CD4-positive, alpha-beta T cell (primary cell): ENCODE measurements at regions of chr1 and their contacts with region 1.

Region 1: DNA sequence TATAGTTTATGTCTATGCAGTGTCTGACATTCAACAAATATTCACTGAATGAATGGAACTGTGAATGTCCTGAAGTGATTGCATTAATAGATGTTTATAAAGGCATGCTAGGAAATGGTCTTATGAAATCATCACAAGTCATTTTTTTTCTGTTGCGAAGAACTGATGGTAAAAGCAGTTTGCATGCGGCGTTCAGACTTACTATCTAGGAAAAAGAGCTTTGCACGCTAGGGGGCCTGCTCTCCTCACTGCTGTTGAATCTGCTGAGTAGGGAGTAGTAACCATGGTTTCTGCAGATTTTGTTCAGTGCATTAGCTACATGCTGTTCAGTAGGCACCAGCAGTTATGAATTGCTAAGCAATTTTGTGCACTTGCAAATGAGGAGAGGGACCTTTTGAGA is 57.9 kb downstream of the CENPF start:
- DNase-seq: peak in 6 of 14 experiments; percentile 8 to 40 (median 26)
- ATAC-seq: peak; percentile 71
- H3K4me3 ChIP-seq: no peak overlapping the region
- H3K4me3 Mint-ChIP-seq: no peak overlapping the region
- H3K27ac ChIP-seq: no peak overlapping the region
- H3K27ac Mint-ChIP-seq: no peak overlapping the region
- H3K4me1 ChIP-seq: no peaks in the 10 kb centered on the region
- H3K4me1 Mint-ChIP-seq: no peaks in the 10 kb centered on the region
- H3K27me3 ChIP-seq: no peaks in the 10 kb centered on the region
- H3K27me3 Mint-ChIP-seq: no peaks in the 10 kb centered on the region
- CTCF ChIP-seq: peak; percentile 39

Region 2: GRCh38 chr1:214637722-214638458 is 23.0 kb before region 1 on chr1:
- CTCF ChIA-PET with region 1: no interaction called
- POLR2A ChIA-PET with region 1: interaction called, 12 read pairs
- intact Hi-C with region 1: no loop called
- DNase-seq: peak in 9 of 14 experiments; percentile 3 to 67 (median 19)
- ATAC-seq: peak; percentile 27
- H3K4me3 ChIP-seq: no peak overlapping the region
- H3K4me3 Mint-ChIP-seq: peak overlapping the region; percentile 68
- H3K27ac ChIP-seq: no peak overlapping the region
- H3K27ac Mint-ChIP-seq: no peak overlapping the region
- H3K4me1 ChIP-seq: peaks cover 18% of the 10 kb centered on the region
- H3K4me1 Mint-ChIP-seq: peaks cover 23% of the 10 kb centered on the region
- H3K27me3 ChIP-seq: no peaks in the 10 kb centered on the region
- H3K27me3 Mint-ChIP-seq: no peaks in the 10 kb centered on the region
- CTCF ChIP-seq: peak; percentile 75